ENCODE measurements at regions of chr7 and their contacts with region 1.

Region 1: GRCh38 chr7:99098824-99099498 is 44.9 kb downstream of the SMURF1 start:
- DNase-seq: no peak
- H3K4me3 ChIP-seq: no peak overlapping the region
- H3K27ac ChIP-seq: no peak overlapping the region
- H3K27me3 ChIP-seq: no peaks in the 10 kb centered on the region
- CTCF ChIP-seq: no peak

Region 2: DNA sequence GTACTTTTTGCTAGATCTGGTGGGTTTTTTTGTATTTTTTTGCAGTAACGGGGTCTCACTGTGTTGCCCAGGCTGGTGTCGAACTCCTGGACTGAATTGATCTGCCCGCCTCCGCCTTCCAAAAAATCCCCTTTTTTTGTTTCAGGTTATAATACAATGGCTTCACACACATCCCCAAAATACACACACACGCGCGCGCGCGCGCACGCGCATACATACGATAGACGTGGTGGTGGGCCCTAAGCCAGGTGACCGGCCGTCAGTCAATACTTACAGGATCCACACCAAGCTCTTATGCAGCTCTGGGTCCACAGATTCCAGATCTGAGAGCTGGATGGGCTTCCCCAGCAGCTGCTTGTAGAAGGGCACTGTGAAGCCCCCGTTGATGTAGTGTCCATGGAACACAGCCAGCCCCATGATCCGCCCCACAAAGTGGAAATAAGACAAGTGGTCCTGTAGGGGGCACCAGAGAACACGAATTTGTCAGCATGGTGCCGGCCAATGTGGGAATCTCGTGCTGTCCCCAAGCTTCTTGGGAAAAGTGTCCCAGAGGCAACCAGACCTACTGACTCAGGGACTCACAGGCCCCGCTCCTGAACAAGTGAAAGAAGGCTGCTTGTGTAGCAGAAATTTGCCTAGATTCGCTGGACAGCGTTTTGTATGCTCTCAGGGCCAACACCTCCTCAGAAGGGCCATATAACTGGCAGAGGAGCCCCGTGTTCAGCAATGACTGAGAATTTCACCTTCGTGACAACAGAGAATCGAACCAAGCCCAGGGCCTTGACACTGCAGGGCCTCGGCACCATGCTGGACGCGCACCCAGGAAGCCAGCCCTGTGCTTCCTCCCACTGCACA is 58.6 kb before region 1 on chr7:
- CTCF ChIA-PET with region 1: no interaction called
- POLR2A ChIA-PET with region 1: interaction called, 15 read pairs
- DNase-seq: peak; percentile 61
- H3K4me3 ChIP-seq: no peak overlapping the region
- H3K27ac ChIP-seq: peak overlapping the region; percentile 57
- H3K27me3 ChIP-seq: no peaks in the 10 kb centered on the region
- CTCF ChIP-seq: peak; percentile 74

Region 3: GRCh38 chr7:99121496-99122021 is 22.6 kb after region 1 on chr7:
- CTCF ChIA-PET with region 1: interaction called, 11 read pairs
- POLR2A ChIA-PET with region 1: no interaction called
- DNase-seq: no peak
- H3K4me3 ChIP-seq: no peak overlapping the region
- H3K27ac ChIP-seq: peak overlapping the region; percentile 31
- H3K27me3 ChIP-seq: no peaks in the 10 kb centered on the region
- CTCF ChIP-seq: no peak

Region 4: DNA sequence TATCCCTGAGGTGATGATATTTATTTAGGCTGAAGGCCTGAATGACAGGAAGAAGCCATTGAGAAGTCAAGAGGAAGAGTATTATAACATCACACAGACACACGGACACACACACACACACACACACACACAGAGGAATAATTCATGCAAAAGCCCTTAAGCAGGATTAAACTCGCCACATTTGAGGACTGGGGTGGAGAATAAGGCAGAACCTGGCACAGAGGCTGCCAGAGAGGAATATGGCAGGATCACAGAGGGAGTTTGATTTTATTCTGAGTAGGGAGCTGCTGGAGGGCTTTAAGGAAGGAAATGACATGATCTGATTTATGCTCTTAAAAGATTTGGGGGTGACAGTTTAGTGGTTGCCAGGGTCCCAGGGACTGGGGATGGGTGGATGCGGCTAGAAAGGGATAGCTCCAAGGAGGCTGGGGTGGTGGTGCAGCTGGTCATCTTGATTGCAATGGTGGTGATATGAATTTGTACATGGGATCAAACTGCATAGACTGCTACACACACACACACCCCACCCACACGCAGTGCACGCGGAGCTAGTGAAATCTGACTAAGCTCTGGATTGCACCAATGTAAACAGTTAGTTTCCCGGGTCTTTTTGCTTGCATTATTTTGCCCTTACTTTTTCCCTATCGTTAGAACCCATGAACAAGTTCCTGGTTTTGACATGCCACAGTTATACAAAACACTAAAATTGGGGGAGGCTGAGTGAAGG is 33.8 kb after region 1 on chr7:
- CTCF ChIA-PET with region 1: no interaction called
- POLR2A ChIA-PET with region 1: no interaction called
- DNase-seq: peak; percentile 58
- H3K4me3 ChIP-seq: no peak overlapping the region
- H3K27ac ChIP-seq: peak overlapping the region; percentile 48
- H3K27me3 ChIP-seq: no peaks in the 10 kb centered on the region
- CTCF ChIP-seq: no peak